B cell (primary cell): ENCODE measurements at regions of chr3 and their contacts with region 1.

Region 1: GRCh38 chr3:112734718-112735350 is 93.9 kb upstream of the CCDC80 start:
- DNase-seq: peak; percentile 83
- ATAC-seq: peak; percentile 72
- H3K4me3 ChIP-seq: no peak overlapping the region
- H3K4me3 Mint-ChIP-seq: no peak overlapping the region
- H3K27ac ChIP-seq: no peak overlapping the region
- H3K27ac Mint-ChIP-seq: no peak overlapping the region
- H3K4me1 ChIP-seq: peaks cover 14 to 16% of the 10 kb centered on the region in 2 donors
- H3K4me1 Mint-ChIP-seq: peaks cover 30% of the 10 kb centered on the region
- H3K27me3 ChIP-seq: no peaks in the 10 kb centered on the region
- H3K27me3 Mint-ChIP-seq: no peaks in the 10 kb centered on the region
- CTCF ChIP-seq: peak; percentile 90

Region 2: DNA sequence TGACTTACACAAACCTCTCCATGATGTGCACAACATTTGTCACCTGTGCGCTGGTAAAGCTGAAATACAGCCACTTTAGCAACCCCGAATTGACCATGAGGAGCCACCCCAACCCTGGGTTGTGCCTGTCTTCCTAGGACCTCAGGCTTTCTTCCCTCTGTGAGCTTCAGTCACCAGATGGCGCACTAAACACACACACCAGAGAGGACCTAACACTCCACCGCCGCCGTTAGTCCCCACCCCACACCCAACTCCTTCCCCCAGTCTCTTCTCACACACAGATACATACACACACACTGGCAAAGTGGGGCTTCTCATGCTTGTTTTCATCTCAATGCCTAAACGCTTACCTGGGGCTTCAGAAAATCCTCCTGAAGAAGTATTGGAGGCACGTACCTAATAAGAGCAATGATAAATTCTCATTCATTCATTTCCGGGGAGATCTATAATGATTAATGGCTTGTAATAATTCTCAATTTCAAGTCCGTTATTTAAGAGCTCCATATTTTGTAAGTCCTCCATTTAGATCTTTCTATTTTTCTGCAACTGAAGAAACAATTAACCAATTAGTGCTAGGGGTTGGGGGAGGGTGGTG is 91.8 kb before region 1 on chr3:
- CTCF ChIA-PET with region 1: interaction called, 43 read pairs
- POLR2A ChIA-PET with region 1: no interaction called
- intact Hi-C with region 1: loop called (anchors 1 kb)
- DNase-seq: peak; percentile 84
- ATAC-seq: peak; percentile 97
- H3K4me3 ChIP-seq: peak overlapping the region in 1 of 5 experiments; percentile 1
- H3K4me3 Mint-ChIP-seq: peak overlapping the region; percentile 66
- H3K27ac ChIP-seq: no peak overlapping the region
- H3K27ac Mint-ChIP-seq: no peak overlapping the region
- H3K4me1 ChIP-seq: peaks cover 0 to 9% of the 10 kb centered on the region in 2 donors
- H3K4me1 Mint-ChIP-seq: peaks cover 8% of the 10 kb centered on the region
- H3K27me3 ChIP-seq: peaks cover 0 to 12% (median 2%) of the 10 kb centered on the region in 4 experiments
- H3K27me3 Mint-ChIP-seq: peaks cover 4% of the 10 kb centered on the region
- CTCF ChIP-seq: peak; percentile 80

Region 3: GRCh38 chr3:112746675-112747280 is 11.9 kb after region 1 on chr3:
- CTCF ChIA-PET with region 1: interaction called, 18 read pairs
- POLR2A ChIA-PET with region 1: no interaction called
- intact Hi-C with region 1: no loop called
- DNase-seq: no peak
- ATAC-seq: no peak
- H3K4me3 ChIP-seq: no peak overlapping the region
- H3K4me3 Mint-ChIP-seq: no peak overlapping the region
- H3K27ac ChIP-seq: no peak overlapping the region
- H3K27ac Mint-ChIP-seq: no peak overlapping the region
- H3K4me1 ChIP-seq: peaks cover 2 to 7% of the 10 kb centered on the region in 2 donors
- H3K4me1 Mint-ChIP-seq: peaks cover 13% of the 10 kb centered on the region
- H3K27me3 ChIP-seq: no peaks in the 10 kb centered on the region
- H3K27me3 Mint-ChIP-seq: no peaks in the 10 kb centered on the region
- CTCF ChIP-seq: no peak

Region 4: DNA sequence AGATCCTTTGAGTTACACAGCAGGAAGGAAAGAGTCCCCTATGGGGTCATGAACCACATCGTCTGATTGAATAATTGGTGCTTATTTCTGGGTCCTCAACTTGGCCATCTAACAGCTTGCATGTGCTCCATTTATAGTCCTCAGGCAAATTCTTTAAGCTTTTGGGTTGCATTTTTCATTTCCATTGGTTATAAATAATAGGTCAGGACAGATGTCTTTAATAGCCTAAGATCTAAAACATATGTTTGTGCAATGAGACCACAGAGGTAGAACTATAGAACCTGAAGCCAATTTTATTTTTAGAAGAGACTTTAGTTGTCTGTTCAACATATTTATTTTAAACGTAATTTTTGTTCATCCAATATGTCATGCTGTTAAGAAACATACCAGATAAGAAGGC is 68.6 kb after region 1 on chr3:
- CTCF ChIA-PET with region 1: no interaction called
- POLR2A ChIA-PET with region 1: no interaction called
- intact Hi-C with region 1: no loop called
- DNase-seq: no peak
- ATAC-seq: no peak
- H3K4me3 ChIP-seq: no peak overlapping the region
- H3K4me3 Mint-ChIP-seq: no peak overlapping the region
- H3K27ac ChIP-seq: no peak overlapping the region
- H3K27ac Mint-ChIP-seq: no peak overlapping the region
- H3K4me1 ChIP-seq: peaks cover 0 to 3% of the 10 kb centered on the region in 2 donors
- H3K4me1 Mint-ChIP-seq: peaks cover 19% of the 10 kb centered on the region
- H3K27me3 ChIP-seq: no peaks in the 10 kb centered on the region
- H3K27me3 Mint-ChIP-seq: no peaks in the 10 kb centered on the region
- CTCF ChIP-seq: no peak

Region 5: GRCh38 chr3:112814266-112814665 is 79.4 kb after region 1 on chr3:
- CTCF ChIA-PET with region 1: interaction called, 19 read pairs
- POLR2A ChIA-PET with region 1: no interaction called
- intact Hi-C with region 1: no loop called
- DNase-seq: peak; percentile 51
- ATAC-seq: no peak
- H3K4me3 ChIP-seq: no peak overlapping the region
- H3K4me3 Mint-ChIP-seq: peak overlapping the region; percentile 66
- H3K27ac ChIP-seq: peak overlapping the region; percentile 15 to 50
- H3K27ac Mint-ChIP-seq: peak overlapping the region; percentile 71
- H3K4me1 ChIP-seq: peaks cover 30 to 42% of the 10 kb centered on the region in 2 donors
- H3K4me1 Mint-ChIP-seq: peaks cover 53% of the 10 kb centered on the region
- H3K27me3 ChIP-seq: no peaks in the 10 kb centered on the region
- H3K27me3 Mint-ChIP-seq: no peaks in the 10 kb centered on the region
- CTCF ChIP-seq: no peak

Region 6: DNA sequence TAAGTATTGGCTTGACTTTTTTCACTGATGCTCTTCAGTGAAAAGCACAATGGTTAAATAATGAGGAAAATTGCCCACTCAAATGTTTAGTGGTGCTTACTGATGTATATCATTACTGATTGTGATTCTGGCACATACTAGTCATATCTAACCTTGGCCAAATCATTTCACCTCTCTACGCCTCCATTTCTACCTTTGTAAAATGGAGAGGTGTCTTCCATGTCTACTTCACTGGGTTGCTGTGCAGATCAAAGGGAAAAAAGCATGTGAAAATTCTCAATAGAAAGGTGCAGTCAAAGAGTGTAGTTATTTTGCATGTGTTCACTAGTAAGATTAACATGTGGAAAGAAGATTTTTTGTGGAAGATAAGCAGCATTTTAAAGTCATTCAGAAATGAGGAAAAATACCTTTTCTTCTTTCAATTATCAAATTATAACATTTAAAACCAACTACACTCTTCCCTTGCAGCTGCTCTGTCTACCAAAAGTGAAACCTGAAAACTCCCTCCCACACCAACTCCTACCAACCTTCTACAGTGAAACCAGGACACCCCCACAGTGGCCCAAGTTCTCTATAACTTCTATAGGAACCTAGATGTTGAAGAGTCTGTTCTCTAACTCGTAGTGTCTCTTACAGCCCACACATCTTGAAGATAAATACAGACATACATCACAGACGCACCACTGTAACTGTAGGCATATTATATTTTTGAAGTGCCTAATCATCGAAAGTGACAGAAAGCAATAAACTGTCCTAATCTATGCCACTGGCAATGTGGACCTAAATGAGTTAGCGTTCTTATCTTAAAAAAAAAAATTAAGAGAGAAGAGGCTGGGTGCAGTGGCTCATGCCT is 238.7 kb after region 1 on chr3:
- CTCF ChIA-PET with region 1: interaction called, 270 read pairs
- POLR2A ChIA-PET with region 1: interaction called, 3 read pairs
- intact Hi-C with region 1: no loop called
- DNase-seq: peak; percentile 60
- ATAC-seq: peak; percentile 85
- H3K4me3 ChIP-seq: peak overlapping the region in 4 of 5 experiments; percentile 32 to 52 (median 42)
- H3K4me3 Mint-ChIP-seq: peak overlapping the region; percentile 82
- H3K27ac ChIP-seq: peak overlapping the region in 1 of 2 donors; percentile 28
- H3K27ac Mint-ChIP-seq: peak overlapping the region; percentile 78
- H3K4me1 ChIP-seq: peaks cover 45 to 54% of the 10 kb centered on the region in 2 donors
- H3K4me1 Mint-ChIP-seq: peaks cover 72% of the 10 kb centered on the region
- H3K27me3 ChIP-seq: no peaks in the 10 kb centered on the region
- H3K27me3 Mint-ChIP-seq: no peaks in the 10 kb centered on the region
- CTCF ChIP-seq: no peak

Region 7: GRCh38 chr3:112990672-112991602 is 256.1 kb after region 1 on chr3 and contains the start of gene GTPBP8:
- CTCF ChIA-PET with region 1: interaction called, 270 read pairs
- POLR2A ChIA-PET with region 1: no interaction called
- intact Hi-C with region 1: no loop called
- DNase-seq: peak; percentile 92
- ATAC-seq: peak; percentile 84
- H3K4me3 ChIP-seq: peak within 1 kb of the TSS; percentile 63 to 89 (median 76)
- H3K4me3 Mint-ChIP-seq: peak within 1 kb of the TSS; percentile 95
- H3K27ac ChIP-seq: peak within 1 kb of the TSS; percentile 82 to 98
- H3K27ac Mint-ChIP-seq: peak within 1 kb of the TSS; percentile 98
- H3K4me1 ChIP-seq: peaks cover 11 to 12% of the 10 kb centered on the region in 2 donors
- H3K4me1 Mint-ChIP-seq: peaks cover 30% of the 10 kb centered on the region
- H3K27me3 ChIP-seq: no peaks in the 10 kb centered on the region
- H3K27me3 Mint-ChIP-seq: no peaks in the 10 kb centered on the region
- CTCF ChIP-seq: no peak
- total RNA-seq, gene GTPBP8: 23.4 and 23.5 TPM in 2 replicates

Region 8: GRCh38 chr3:113287803-113288648 is 553.2 kb after region 1 on chr3:
- CTCF ChIA-PET with region 1: interaction called, 14 read pairs
- POLR2A ChIA-PET with region 1: no interaction called
- intact Hi-C with region 1: loop called (anchors 2 kb)
- DNase-seq: peak; percentile 69
- ATAC-seq: peak; percentile 69
- H3K4me3 ChIP-seq: no peak overlapping the region
- H3K4me3 Mint-ChIP-seq: no peak overlapping the region
- H3K27ac ChIP-seq: no peak overlapping the region
- H3K27ac Mint-ChIP-seq: no peak overlapping the region
- H3K4me1 ChIP-seq: no peaks in the 10 kb centered on the region
- H3K4me1 Mint-ChIP-seq: no peaks in the 10 kb centered on the region
- H3K27me3 ChIP-seq: no peaks in the 10 kb centered on the region
- H3K27me3 Mint-ChIP-seq: no peaks in the 10 kb centered on the region
- CTCF ChIP-seq: peak; percentile 100